ENCODE measurements at regions of chr6 and their contacts with region 1.

Region 1: GRCh38 chr6:57316581-57317059 is 810 bp upstream of the PRIM2 start:
- DNase-seq: peak; percentile 82
- CTCF ChIP-seq: peak; percentile 89

Region 2: DNA sequence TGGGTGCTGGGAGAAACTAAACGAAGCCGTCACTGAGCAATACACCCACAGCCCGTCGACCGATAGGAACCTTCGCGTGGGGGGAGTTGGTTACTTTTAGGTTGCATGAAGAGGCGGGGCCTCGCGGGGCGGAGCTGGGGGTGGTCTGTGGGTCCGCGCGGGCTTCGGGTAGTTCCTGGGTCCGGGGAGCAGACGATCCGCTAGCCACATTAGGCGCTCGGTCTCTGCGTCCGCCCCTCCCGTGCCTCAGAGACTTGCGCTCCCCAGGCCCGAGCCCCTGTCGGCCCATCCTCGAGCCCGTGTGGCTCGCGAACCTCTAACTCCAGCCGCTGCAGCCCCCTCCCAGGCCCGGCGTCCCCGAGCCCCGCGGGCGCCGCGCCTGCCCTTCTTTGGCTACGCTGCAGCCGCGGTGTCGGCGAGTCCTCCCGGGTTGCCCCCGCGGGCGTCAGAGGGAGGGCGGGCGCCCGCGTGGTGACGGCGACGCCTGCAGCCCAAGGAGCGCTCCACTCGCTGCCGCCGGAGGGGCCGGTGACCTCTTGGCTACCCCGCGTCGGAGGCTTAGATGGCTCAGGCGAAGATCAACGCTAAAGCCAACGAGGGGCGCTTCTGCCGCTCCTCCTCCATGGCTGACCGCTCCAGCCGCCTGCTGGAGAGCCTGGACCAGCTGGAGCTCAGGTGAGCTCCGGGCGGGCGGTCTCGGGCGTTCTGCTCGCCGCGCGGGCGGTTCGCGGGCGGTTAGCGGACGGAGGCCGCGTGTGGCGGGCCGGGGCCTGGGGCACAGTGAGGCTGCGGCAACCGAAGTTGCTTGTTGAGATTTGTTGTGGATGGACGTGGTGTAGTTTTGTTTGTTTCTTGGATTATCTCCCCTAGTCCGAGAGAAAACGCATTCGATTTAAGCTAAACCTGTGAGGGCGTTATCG is 144.2 kb before region 1 on chr6 and contains the start of gene BAG2:
- CTCF ChIA-PET with region 1: interaction called, 11 read pairs
- POLR2A ChIA-PET with region 1: no interaction called
- DNase-seq: peak; percentile 93
- CTCF ChIP-seq: peak; percentile 11

Region 3: DNA sequence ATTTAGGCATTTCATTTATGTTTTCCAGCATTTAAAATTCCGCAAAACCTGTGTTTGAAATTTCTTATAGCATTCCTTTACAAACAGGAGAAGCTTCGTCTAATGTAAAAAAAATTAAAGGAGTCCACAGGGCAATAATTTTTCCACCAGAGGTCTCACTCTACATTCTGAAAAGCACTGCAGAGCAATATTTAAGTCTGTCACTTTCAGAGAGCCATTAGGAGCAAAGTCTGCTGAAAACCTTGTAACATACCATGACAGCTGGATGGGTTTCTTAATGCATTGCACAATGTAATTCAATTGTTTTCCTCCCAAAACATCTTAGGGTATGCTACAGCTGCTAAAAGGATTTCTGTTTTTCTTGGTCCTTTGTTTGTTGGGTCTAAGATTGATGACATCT is 126.5 kb before region 1 on chr6:
- CTCF ChIA-PET with region 1: interaction called, 10 read pairs
- POLR2A ChIA-PET with region 1: no interaction called
- DNase-seq: no peak
- CTCF ChIP-seq: no peak

Region 4: DNA sequence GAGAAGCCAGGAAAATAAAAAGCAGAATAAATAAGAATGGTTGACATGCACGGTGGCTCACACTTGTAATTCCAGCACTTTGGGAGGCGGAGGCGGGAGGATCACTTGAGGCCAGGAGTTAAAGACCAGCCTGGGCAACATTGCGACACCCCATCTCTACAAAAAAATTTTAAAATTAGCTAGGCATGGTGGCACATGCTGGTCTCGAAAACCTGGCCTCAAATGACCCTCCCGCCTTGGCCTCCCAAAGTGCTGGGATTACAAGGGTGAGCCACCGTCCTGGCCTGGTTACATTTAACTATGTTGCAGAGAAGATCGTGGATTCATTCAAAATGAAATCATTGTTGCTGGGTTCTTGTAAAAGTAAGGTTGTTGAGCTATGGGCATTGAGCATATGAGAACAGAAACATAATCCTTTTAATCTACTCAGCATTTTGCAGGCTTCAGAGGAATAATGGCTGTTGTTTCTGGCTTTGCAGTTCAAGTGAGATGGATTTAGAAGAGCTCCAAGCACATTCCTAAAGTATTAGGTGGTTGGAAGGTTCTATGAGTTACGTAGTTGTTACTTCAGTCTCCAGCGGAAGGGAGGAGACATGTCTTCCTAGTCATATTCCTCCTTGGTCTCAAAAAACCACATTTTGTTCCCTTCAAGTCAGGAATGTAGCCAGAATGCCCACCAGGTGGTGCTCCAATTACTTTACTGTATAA is 48.9 kb before region 1 on chr6:
- CTCF ChIA-PET with region 1: interaction called, 32 read pairs
- POLR2A ChIA-PET with region 1: no interaction called
- DNase-seq: no peak
- CTCF ChIP-seq: peak; percentile 40

Region 5: GRCh38 chr6:57303931-57304681 is 12.5 kb before region 1 on chr6:
- CTCF ChIA-PET with region 1: interaction called, 32 read pairs
- POLR2A ChIA-PET with region 1: no interaction called
- DNase-seq: no peak
- CTCF ChIP-seq: no peak

Measured in GM10248 (cell line).